ENCODE measurements at regions of chr2 and their contacts with region 1.

Region 1: DNA sequence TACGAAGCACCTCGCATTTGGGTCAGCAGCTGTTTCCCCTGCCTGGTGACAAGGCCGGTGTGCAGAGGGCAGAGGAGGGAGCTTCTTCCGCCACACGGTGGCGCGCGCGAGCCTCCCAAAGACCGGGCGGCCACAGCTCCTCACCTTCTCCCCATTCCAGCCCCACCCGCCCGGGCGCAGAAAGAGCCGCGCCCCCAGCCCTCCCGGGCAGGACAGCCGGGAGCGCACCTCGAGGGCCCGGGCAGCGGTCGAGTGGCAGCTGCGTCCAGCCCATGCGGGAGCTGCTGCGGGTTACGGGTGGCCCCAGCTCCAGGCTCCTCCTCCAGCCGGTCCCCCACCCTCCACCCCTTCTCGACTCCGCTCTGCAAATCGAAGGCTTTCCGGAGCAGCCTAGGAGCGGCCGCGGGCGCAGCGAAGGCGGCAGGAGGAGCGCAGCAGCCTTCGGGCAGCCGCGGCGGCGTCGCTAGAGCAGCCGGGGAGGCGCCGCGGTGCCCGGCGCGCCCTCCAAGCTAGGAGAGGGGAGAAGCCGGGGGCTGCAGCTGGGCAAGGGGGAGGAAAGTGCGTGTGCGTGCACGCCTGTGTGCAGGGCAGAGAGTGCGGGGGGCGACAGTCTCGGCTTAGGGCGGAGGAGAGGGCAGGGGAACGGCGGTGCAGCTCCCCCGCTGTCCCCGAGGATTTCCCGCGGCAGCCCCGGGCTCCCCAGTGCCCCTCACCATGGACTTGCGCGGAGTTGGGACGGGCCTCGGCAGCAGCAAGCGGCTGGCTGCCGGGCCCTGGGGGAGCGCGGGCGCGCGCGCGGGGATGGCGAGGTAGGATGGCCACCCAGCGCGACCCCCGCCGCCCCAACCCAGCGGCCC is at the start of gene CCDC85A:
- DNase-seq: peak; percentile 85
- H3K4me3 ChIP-seq: peak within 1 kb of the TSS; percentile 54
- H3K27ac ChIP-seq: no peak within 1 kb of the TSS
- H3K4me1 ChIP-seq: no peaks in the 10 kb centered on the region
- H3K27me3 ChIP-seq: peaks cover 62% of the 10 kb centered on the region
- CTCF ChIP-seq: peak; percentile 93
- total RNA-seq, gene CCDC85A: 0.15 and 0.39 TPM in 2 replicates

Region 2: DNA sequence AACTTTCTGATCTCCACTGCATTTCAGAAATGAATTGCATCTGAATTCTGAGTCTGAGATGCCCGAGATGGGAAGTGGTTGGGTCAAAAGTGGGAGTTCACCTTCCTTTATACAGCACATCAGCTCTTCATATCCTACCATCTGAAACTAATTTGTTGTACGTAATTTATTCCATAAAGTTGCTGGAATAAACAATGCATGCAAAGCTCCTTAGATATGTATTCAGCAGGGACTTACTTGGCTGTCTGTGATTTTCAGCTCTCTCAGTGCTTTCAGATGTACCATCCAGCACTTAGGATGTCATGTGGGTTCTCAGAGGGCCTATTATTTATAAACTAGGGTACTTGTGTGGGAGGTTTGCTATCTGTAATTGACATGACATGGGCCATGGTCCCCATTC is 213.4 kb before region 1 on chr2:
- CTCF ChIA-PET with region 1: no interaction called
- POLR2A ChIA-PET with region 1: no interaction called
- intact Hi-C with region 1: no loop called
- DNase-seq: no peak
- H3K4me3 ChIP-seq: no peak overlapping the region
- H3K27ac ChIP-seq: no peak overlapping the region
- H3K4me1 ChIP-seq: no peaks in the 10 kb centered on the region
- H3K27me3 ChIP-seq: peaks cover 24% of the 10 kb centered on the region
- CTCF ChIP-seq: no peak

Region 3: GRCh38 chr2:56055405-56055804 is 128.5 kb before region 1 on chr2:
- CTCF ChIA-PET with region 1: no interaction called
- POLR2A ChIA-PET with region 1: no interaction called
- intact Hi-C with region 1: no loop called
- DNase-seq: no peak
- H3K4me3 ChIP-seq: no peak overlapping the region
- H3K27ac ChIP-seq: no peak overlapping the region
- H3K4me1 ChIP-seq: no peaks in the 10 kb centered on the region
- H3K27me3 ChIP-seq: no peaks in the 10 kb centered on the region
- CTCF ChIP-seq: no peak

Region 4: GRCh38 chr2:56749152-56749752 is 565.4 kb after region 1 on chr2:
- CTCF ChIA-PET with region 1: no interaction called
- POLR2A ChIA-PET with region 1: no interaction called
- intact Hi-C with region 1: loop called (anchors 2 kb)
- DNase-seq: peak; percentile 49
- H3K4me3 ChIP-seq: no peak overlapping the region
- H3K27ac ChIP-seq: no peak overlapping the region
- H3K4me1 ChIP-seq: no peaks in the 10 kb centered on the region
- H3K27me3 ChIP-seq: no peaks in the 10 kb centered on the region
- CTCF ChIP-seq: peak; percentile 63

Region 5: GRCh38 chr2:57022496-57022895 is 838.6 kb after region 1 on chr2:
- CTCF ChIA-PET with region 1: no interaction called
- POLR2A ChIA-PET with region 1: no interaction called
- intact Hi-C with region 1: loop called (anchors 10 kb)
- DNase-seq: no peak
- H3K4me3 ChIP-seq: no peak overlapping the region
- H3K27ac ChIP-seq: no peak overlapping the region
- H3K4me1 ChIP-seq: no peaks in the 10 kb centered on the region
- H3K27me3 ChIP-seq: no peaks in the 10 kb centered on the region
- CTCF ChIP-seq: no peak

Region 6: GRCh38 chr2:57497489-57498096 is 1313.7 kb after region 1 on chr2:
- CTCF ChIA-PET with region 1: interaction called, 7 read pairs
- POLR2A ChIA-PET with region 1: no interaction called
- intact Hi-C with region 1: loop called (anchors 5 kb)
- DNase-seq: peak; percentile 68
- H3K4me3 ChIP-seq: no peak overlapping the region
- H3K27ac ChIP-seq: no peak overlapping the region
- H3K4me1 ChIP-seq: no peaks in the 10 kb centered on the region
- H3K27me3 ChIP-seq: no peaks in the 10 kb centered on the region
- CTCF ChIP-seq: peak; percentile 89

Region 7: DNA sequence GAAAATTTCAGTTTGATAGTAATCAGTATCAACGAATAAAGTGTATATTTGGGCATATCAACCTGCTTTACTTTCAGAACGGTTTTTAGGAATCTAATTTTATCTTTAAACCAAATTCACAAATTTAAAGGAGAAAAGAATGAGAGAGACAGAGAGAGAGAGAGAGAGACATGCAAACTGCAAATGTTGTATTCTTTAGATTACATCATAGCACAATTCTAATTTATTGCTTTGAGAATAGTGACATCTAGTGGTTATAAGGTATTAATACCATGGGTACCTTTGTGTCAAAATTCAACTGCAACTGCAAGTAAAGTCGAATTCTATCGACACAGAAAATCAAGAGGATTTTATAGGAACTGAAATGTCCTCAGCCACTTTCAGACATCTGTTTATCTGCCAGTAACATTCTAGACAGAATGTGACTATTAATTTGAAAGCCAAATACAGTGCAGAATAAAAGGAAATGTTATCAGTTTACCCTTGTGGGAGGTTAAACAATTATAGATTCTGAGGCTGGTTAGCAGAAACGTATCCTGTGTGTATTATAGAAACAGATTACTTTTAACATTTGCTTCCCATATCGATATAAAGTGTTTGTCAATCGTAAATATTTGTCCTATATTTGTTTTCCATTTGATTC is 1332.9 kb after region 1 on chr2:
- CTCF ChIA-PET with region 1: interaction called, 5 read pairs
- POLR2A ChIA-PET with region 1: no interaction called
- intact Hi-C with region 1: loop called (anchors 1 kb)
- DNase-seq: peak; percentile 74
- H3K4me3 ChIP-seq: no peak overlapping the region
- H3K27ac ChIP-seq: no peak overlapping the region
- H3K4me1 ChIP-seq: peaks cover 8% of the 10 kb centered on the region
- H3K27me3 ChIP-seq: no peaks in the 10 kb centered on the region
- CTCF ChIP-seq: peak; percentile 63